ENCODE measurements at regions of chr10 and their contacts with region 1.

Region 1: DNA sequence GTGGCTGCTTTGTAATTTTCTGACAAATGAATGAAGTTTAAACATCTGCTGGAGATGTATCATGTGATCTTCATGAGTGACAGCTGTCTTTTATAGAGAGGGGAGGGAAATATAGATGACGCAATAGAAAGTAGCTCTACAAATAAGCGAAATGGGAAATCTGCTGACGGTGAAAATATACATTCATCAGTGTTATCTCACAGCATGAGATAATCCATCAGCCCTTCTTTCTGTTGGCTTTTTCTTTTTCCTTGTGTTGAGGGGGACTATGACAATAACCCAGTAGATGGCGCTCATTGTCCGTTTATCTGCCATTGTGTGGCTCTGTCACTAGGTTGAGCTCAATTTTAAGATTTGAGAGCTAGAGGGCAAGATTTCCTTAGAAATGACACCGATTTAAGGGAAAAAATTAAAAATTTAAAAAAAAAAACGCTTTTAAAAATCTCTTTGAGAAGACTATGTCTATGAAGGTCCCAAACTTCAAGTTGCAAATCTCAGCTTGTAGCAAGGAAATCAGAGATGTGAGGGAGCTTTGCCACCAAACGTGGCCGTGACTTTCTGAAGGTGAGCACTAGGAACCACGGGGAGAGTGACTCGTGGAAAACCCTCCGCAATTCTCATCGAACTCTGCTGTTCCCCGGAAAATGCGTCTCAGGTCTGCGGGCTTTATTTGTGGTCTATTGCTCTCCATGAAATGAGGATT is 114.6 kb upstream of the SFMBT2 start:
- DNase-seq: peak in 4 of 5 donors; percentile 43 to 66 (median 50)
- ATAC-seq: peak; percentile 61 to 87 (median 81)
- H3K4me3 ChIP-seq: no peak overlapping the region
- H3K27ac ChIP-seq: no peak overlapping the region
- H3K4me1 ChIP-seq: no peaks in the 10 kb centered on the region
- H3K27me3 ChIP-seq: peaks cover 0 to 28% (median 0%) of the 10 kb centered on the region in 9 donors
- CTCF ChIP-seq: peak; percentile 61 to 89 (median 84)
- POLR2A ChIP-seq: no peak

Region 2: GRCh38 chr10:7378602-7379403 is 146.7 kb before region 1 on chr10:
- intact Hi-C with region 1: no loop called
- DNase-seq: no peak
- ATAC-seq: peak in 1 of 4 donors; percentile 33
- H3K4me3 ChIP-seq: no peak overlapping the region
- H3K27ac ChIP-seq: no peak overlapping the region
- H3K4me1 ChIP-seq: peaks cover 0 to 7% (median 0%) of the 10 kb centered on the region in 12 donors
- H3K27me3 ChIP-seq: no peaks in the 10 kb centered on the region
- CTCF ChIP-seq: no peak
- POLR2A ChIP-seq: no peak

Region 3: DNA sequence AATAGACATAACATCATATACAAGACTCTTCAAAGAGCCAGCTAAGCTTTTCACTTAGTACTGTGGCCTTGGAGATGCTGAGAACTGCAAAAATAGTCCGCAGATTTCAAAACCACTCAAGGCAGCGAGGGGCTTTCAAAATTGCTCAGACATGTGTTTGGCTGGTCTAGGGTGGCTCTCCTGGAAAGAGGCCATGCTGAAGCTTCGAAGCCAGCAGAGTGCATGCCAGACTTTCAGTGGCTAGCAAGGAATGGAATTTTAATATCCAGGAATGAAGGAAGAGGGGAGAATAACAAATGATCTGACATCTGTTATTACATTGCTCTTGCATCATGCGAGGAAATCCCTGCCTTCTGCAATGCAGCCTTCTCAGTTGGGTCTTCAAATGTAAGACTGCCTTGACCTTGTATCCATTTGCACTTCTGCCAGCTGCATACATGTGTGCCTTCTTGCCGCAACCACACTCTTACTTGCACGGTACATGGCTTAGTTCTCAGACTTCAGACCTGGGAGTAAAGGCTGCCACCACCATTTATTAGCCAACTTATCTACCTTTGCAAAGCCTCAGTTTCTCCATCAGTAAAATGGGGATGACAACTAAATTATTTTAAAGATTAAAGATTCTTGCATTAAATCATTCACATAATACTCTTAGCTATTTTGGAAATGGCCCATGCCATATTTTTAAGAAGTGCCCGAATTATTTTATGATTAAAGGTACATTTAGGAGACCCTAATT is 85.4 kb after region 1 on chr10:
- intact Hi-C with region 1: loop called in 3 of 10 experiments (anchors 2 to 10 kb)
- DNase-seq: peak in 1 of 5 donors; percentile 45
- ATAC-seq: peak in 3 of 4 donors; percentile 30 to 76 (median 72)
- H3K4me3 ChIP-seq: no peak overlapping the region
- H3K27ac ChIP-seq: peak overlapping the region in 3 of 12 donors; percentile 14 to 41 (median 14)
- H3K4me1 ChIP-seq: peaks cover 0 to 20% (median 0%) of the 10 kb centered on the region in 12 donors
- H3K27me3 ChIP-seq: no peaks in the 10 kb centered on the region
- CTCF ChIP-seq: no peak
- POLR2A ChIP-seq: no peak

Region 4: DNA sequence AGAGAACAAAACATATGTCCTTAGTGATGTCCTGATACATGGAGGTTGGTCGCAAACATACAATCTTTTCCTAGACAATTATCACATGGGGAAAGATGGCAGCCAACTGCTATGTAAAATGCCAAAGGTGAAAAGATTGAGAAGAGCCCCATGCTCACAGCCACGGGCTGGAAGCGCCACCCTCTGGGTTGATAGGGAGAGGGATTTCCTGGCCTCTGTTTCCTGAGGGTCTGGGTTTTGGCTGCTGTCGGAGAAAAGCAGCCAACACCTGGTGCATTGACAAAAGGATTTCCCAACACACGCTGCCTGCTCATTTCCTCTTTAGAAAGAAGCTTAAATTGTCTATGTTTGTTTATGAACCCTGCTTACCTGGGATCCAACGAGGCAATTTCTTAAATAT is 97.5 kb after region 1 on chr10:
- intact Hi-C with region 1: loop called in 8 of 10 experiments (anchors 2 to 10 kb)
- DNase-seq: no peak
- ATAC-seq: peak in 2 of 4 donors; percentile 42 to 77
- H3K4me3 ChIP-seq: no peak overlapping the region
- H3K27ac ChIP-seq: no peak overlapping the region
- H3K4me1 ChIP-seq: peaks cover 0 to 17% (median 5%) of the 10 kb centered on the region in 12 donors
- H3K27me3 ChIP-seq: no peaks in the 10 kb centered on the region
- CTCF ChIP-seq: peak in 10 of 12 donors; percentile 13 to 60 (median 42)
- POLR2A ChIP-seq: no peak

Region 5: DNA sequence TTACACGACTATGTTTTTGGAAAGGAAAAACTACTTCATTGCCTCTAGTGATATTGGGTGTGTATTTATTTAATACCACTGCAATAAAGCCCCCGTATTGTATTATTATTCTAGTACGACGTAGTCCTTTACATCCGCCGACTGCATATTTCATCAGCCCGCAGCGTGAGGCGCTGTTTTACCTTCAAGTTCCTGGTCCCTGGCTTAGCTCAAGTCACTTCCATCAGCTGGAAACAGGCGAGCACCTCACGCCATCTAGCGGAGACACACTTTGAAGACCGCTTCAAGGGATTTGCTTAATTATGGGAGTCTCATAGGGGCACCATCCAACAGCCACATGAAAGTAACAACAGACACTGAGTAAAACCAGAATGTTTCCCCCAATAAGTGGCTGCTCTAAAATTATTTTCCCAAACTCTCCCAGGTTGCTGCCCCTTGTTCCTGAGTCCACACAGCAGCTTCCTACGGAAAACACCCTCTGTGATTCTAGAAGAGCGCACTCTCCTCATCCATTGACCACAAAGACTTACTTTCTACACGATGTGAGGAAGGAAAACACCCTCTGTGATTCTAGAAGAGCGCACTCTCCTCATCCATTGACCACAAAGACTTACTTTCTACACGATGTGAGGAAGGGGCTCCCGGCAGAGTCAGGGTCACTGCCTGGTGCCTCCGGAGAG is 161.9 kb after region 1 on chr10:
- intact Hi-C with region 1: loop called (anchors 1 to 2 kb)
- DNase-seq: peak; percentile 80 to 87 (median 81)
- ATAC-seq: peak; percentile 77 to 95 (median 94)
- H3K4me3 ChIP-seq: no peak overlapping the region
- H3K27ac ChIP-seq: no peak overlapping the region
- H3K4me1 ChIP-seq: peaks cover 0 to 2% (median 0%) of the 10 kb centered on the region in 12 donors
- H3K27me3 ChIP-seq: peaks cover 0 to 7% (median 0%) of the 10 kb centered on the region in 9 donors
- CTCF ChIP-seq: peak; percentile 72 to 95 (median 88)
- POLR2A ChIP-seq: no peak

Region 6: GRCh38 chr10:9209105-9209798 is 1683.8 kb after region 1 on chr10:
- intact Hi-C with region 1: loop called in 3 of 10 experiments (anchors 5 to 10 kb)
- DNase-seq: peak; percentile 24 to 56 (median 35)
- ATAC-seq: peak in 1 of 4 donors; percentile 47
- H3K4me3 ChIP-seq: no peak overlapping the region
- H3K27ac ChIP-seq: no peak overlapping the region
- H3K4me1 ChIP-seq: no peaks in the 10 kb centered on the region
- H3K27me3 ChIP-seq: peaks cover 0 to 10% (median 0%) of the 10 kb centered on the region in 9 donors
- CTCF ChIP-seq: peak; percentile 82 to 95 (median 88)
- POLR2A ChIP-seq: no peak

Region 7: GRCh38 chr10:9289811-9290210 is 1764.3 kb after region 1 on chr10:
- intact Hi-C with region 1: loop called in 1 of 10 experiments (anchors 10 kb)
- DNase-seq: no peak
- ATAC-seq: no peak
- H3K4me3 ChIP-seq: no peak overlapping the region
- H3K27ac ChIP-seq: no peak overlapping the region
- H3K4me1 ChIP-seq: peaks cover 0 to 4% (median 0%) of the 10 kb centered on the region in 12 donors
- H3K27me3 ChIP-seq: peaks cover 0 to 11% (median 0%) of the 10 kb centered on the region in 9 donors
- CTCF ChIP-seq: no peak
- POLR2A ChIP-seq: no peak

Region 8: GRCh38 chr10:9302120-9302746 is 1776.8 kb after region 1 on chr10:
- intact Hi-C with region 1: loop called in 8 of 10 experiments (anchors 5 kb)
- DNase-seq: no peak
- ATAC-seq: peak in 1 of 4 donors; percentile 45
- H3K4me3 ChIP-seq: no peak overlapping the region
- H3K27ac ChIP-seq: no peak overlapping the region
- H3K4me1 ChIP-seq: no peaks in the 10 kb centered on the region
- H3K27me3 ChIP-seq: peaks cover 0 to 5% (median 0%) of the 10 kb centered on the region in 9 donors
- CTCF ChIP-seq: peak; percentile 14 to 56 (median 44)
- POLR2A ChIP-seq: no peak

Measured in heart left ventricle (tissue), 16 donors.